BJ (cell line): ENCODE measurements at regions of chr16 and their contacts with region 1.

Region 1: GRCh38 chr16:75250809-75251279 is 580 bp downstream of the BCAR1 start:
- DNase-seq: no peak
- H3K4me3 ChIP-seq: peak overlapping the region; percentile 84
- H3K27me3 ChIP-seq: no peaks in the 10 kb centered on the region
- CTCF ChIP-seq: no peak

Region 2: GRCh38 chr16:75305364-75306098 is 54.7 kb after region 1 on chr16:
- CTCF ChIA-PET with region 1: interaction called, 3 read pairs
- POLR2A ChIA-PET with region 1: interaction called, 11 read pairs
- DNase-seq: peak; percentile 100
- H3K4me3 ChIP-seq: no peak overlapping the region
- H3K27me3 ChIP-seq: no peaks in the 10 kb centered on the region
- CTCF ChIP-seq: no peak

Region 3: DNA sequence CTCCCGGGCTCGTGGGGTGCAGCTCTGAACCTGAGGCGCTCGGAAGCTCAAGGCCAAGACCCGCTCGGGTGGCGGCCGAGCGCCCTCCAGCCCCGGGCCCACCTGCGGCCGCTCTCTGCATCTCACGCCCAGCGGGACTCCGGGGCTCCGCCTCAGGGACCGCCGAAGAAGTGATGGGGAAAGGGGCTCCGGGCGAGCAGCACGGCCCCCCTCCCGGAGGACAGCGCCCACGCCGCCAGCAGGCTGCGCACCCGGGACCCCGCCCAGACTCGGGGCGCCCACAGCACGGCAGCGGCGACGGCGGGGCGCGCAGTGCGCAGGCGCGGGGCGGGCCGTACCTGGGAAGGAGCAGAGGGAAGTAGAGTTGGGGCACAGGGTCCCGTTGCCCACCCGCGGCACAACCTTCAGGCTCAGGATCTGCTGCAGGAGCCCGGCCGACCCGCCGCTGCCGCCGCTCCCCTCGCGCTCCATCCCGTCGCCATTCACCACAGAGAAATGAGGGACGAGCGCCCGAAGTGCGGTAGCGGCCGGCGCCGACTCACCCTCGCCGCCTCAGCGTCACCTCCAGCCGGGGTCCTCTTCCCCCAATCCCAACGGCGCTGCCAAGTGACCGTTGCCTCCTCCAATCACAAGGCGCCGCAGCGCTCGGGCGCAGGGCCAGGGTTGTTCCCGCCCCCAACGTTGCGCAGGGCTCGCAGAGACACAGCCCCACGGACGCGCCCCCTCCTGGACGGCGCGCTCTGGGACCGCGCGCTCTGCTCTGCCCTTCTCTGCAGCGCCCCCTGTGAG is 213.5 kb after region 1 on chr16 and contains the start of gene TMEM170A:
- CTCF ChIA-PET with region 1: no interaction called
- POLR2A ChIA-PET with region 1: no interaction called
- DNase-seq: peak; percentile 89
- H3K4me3 ChIP-seq: peak within 1 kb of the TSS; percentile 74
- H3K27me3 ChIP-seq: no peaks in the 10 kb centered on the region
- CTCF ChIP-seq: peak; percentile 100
- polyA plus RNA-seq, gene TMEM170A: 5.2 and 8.2 TPM in 2 replicates